Heart left ventricle (tissue), 16 donors: ENCODE measurements at regions of chr15 and their contacts with region 1.

Region 1: DNA sequence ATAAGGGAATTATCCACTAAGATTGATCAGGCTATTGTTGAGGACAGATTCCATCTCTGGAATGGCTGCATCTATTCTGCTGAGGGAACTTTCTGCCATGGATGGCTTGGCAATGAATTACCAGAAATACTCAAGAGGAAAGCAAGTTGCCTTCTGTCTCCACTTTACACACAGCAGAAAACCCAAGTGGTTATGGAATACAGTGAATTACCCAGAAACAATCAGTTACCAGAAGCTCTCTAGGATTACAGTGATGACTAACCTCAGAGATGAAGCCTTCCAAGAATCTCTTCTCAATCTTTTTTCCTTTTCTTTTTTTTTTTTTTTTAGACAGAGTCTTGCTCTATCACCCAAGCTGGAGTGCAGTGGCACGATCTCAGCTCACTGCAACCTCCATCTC is 183.3 kb downstream of the WDR76 start:
- DNase-seq: no peak
- ATAC-seq: no peak
- H3K4me3 ChIP-seq: no peak overlapping the region
- H3K27ac ChIP-seq: no peak overlapping the region
- H3K4me1 ChIP-seq: no peaks in the 10 kb centered on the region
- H3K27me3 ChIP-seq: no peaks in the 10 kb centered on the region
- CTCF ChIP-seq: no peak
- POLR2A ChIP-seq: no peak

Region 2: DNA sequence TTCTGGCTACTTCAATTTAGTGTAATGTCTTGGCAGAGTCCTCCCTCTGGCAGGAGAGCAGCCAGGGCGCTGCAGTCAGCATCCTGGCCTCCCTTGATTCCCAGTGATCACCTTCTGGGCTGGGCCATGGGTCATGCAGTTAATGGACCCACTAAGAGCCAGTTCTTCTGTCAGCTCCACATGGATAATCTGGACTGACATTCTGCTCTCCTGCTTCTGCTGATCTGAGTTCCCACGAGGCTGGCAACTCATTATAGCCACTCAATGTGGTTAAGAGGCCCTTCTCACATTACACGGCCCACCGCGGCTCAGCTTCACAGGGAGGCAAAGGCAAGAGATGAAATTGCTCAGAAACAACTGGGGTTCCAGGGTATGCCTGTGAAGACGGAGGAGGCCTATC is 89.3 kb before region 1 on chr15:
- intact Hi-C with region 1: no loop called
- DNase-seq: no peak
- ATAC-seq: peak in 1 of 4 donors; percentile 21
- H3K4me3 ChIP-seq: no peak overlapping the region
- H3K27ac ChIP-seq: no peak overlapping the region
- H3K4me1 ChIP-seq: peaks cover 0 to 31% (median 5%) of the 10 kb centered on the region in 12 donors
- H3K27me3 ChIP-seq: no peaks in the 10 kb centered on the region
- CTCF ChIP-seq: no peak
- POLR2A ChIP-seq: no peak

Region 3: DNA sequence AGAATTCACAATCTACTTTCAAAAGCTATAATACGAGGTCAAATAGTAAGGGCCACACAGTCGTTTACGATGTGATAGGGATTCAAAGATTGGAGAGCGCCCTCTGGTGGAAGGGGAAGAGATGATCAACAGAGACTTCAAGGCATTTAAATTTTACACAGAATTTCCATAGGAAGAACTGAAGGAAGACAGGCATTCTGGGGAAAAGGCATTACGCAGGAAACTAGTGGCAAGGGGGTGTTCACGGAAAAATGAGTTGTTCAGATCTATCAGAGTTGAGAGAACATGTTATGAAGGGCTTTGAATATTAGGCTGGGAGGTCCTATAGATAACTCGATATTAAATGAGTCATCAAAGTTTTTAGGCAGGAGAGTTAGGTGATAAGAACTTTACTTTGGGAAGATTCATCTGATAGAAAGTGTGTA is 56.2 kb after region 1 on chr15:
- intact Hi-C with region 1: loop called in 1 of 10 experiments (anchors 5 kb)
- DNase-seq: peak in 4 of 5 donors; percentile 31 to 42 (median 36)
- ATAC-seq: peak in 2 of 4 donors; percentile 50 to 59
- H3K4me3 ChIP-seq: no peak overlapping the region
- H3K27ac ChIP-seq: no peak overlapping the region
- H3K4me1 ChIP-seq: no peaks in the 10 kb centered on the region
- H3K27me3 ChIP-seq: peaks cover 0 to 3% (median 0%) of the 10 kb centered on the region in 9 donors
- CTCF ChIP-seq: peak; percentile 54 to 77 (median 68)
- POLR2A ChIP-seq: no peak

Region 4: DNA sequence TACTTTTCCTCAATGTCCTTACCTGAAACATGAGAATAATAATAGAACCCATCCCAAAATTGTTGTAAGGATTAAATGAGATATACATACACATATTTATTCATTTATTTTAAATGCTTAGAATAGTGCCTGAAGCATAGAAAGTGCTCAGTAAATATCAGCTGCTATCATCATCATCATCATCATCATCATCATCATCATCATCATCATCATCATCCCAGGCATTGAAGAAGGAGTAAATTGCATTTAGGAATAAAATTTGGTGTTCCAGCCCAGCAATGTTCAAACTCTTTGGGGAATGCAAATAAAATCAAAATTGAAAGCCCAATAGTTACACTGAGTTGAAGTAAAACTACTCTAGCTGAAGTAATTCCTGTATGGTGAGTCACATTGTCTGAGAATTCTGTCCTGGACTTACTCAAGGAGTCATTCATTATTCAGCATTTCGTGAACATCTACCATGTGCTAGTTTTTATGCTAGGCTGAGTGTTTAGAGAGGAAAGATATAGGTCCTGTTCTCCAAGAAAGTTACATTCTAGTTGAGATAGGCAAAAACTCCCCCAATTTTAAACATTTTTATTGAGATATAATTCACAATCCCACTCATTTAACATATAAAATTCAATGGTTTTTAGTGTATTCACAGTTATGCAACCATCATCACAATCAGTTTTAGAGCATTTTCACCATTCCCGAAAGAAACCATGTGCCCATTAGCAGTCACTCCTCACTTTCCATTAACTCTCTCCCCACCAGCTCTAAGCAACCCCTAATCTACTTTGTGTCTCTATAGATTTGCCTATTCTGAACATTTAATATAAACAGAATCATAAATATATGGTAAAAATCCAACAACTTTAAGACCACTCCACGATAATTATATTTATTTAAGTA is 77.7 kb after region 1 on chr15:
- intact Hi-C with region 1: no loop called
- DNase-seq: no peak
- ATAC-seq: peak in 1 of 4 donors; percentile 29
- H3K4me3 ChIP-seq: no peak overlapping the region
- H3K27ac ChIP-seq: no peak overlapping the region
- H3K4me1 ChIP-seq: no peaks in the 10 kb centered on the region
- H3K27me3 ChIP-seq: no peaks in the 10 kb centered on the region
- CTCF ChIP-seq: no peak
- POLR2A ChIP-seq: no peak

Region 5: GRCh38 chr15:44195151-44195740 is 185.2 kb after region 1 on chr15 and contains the start of gene FRMD5:
- intact Hi-C with region 1: no loop called
- DNase-seq: peak; percentile 78 to 90 (median 82)
- ATAC-seq: peak; percentile 98 to 100 (median 99)
- H3K4me3 ChIP-seq: peak within 1 kb of the TSS; percentile 38 to 86 (median 58)
- H3K27ac ChIP-seq: peak within 1 kb of the TSS in 4 of 12 donors; percentile 3 to 60 (median 28)
- H3K4me1 ChIP-seq: peaks cover 0 to 27% (median 9%) of the 10 kb centered on the region in 12 donors
- H3K27me3 ChIP-seq: peaks cover 5 to 71% (median 30%) of the 10 kb centered on the region in 9 donors
- CTCF ChIP-seq: peak in 5 of 12 donors; percentile 23 to 44 (median 31)
- POLR2A ChIP-seq: no peak
- total RNA-seq, gene FRMD5: 35.4 to 110 (median 70.0) TPM

Region 6: GRCh38 chr15:44584162-44584749 is 574.2 kb after region 1 on chr15:
- intact Hi-C with region 1: no loop called
- DNase-seq: peak in 3 of 5 donors; percentile 20 to 52 (median 46)
- ATAC-seq: peak in 3 of 4 donors; percentile 66 to 78 (median 69)
- H3K4me3 ChIP-seq: no peak overlapping the region
- H3K27ac ChIP-seq: no peak overlapping the region
- H3K4me1 ChIP-seq: no peaks in the 10 kb centered on the region
- H3K27me3 ChIP-seq: no peaks in the 10 kb centered on the region
- CTCF ChIP-seq: peak in 7 of 12 donors; percentile 27 to 55 (median 40)
- POLR2A ChIP-seq: no peak